PC-9 (cell line): ENCODE measurements at regions of chr7 and their contacts with region 1.

Region 1: DNA sequence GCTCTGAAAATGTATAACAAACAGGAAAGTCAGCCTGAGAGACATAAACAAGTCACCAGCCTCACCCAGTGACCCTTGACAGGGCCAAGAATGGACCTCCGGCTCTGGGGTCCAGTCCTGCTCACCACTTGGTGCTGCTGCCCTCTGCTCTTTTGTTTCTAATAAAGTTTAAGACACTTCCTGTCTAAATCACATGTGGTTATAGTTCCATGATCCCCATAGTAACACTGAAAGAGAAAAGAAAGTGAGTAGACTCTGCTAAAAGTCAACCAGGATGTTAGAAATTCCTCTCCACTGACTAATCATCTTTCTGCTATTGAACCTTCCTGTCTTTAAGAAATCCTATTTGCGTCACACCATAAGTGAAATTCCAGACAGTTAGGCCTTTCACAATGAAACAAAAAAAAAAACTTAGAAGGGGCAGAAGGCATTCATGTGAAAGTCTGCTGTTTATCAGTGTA is 179.2 kb upstream of the BET1 start:
- DNase-seq: peak; percentile 69 to 95
- H3K4me3 ChIP-seq: peak overlapping the region; percentile 27; the same call in 1 of the 2 replicates
- H3K27ac ChIP-seq: peak overlapping the region; percentile 91
- H3K4me1 ChIP-seq: peaks cover 24% of the 10 kb centered on the region
- H3K27me3 ChIP-seq: no peaks in the 10 kb centered on the region
- CTCF ChIP-seq: no peak

Region 2: DNA sequence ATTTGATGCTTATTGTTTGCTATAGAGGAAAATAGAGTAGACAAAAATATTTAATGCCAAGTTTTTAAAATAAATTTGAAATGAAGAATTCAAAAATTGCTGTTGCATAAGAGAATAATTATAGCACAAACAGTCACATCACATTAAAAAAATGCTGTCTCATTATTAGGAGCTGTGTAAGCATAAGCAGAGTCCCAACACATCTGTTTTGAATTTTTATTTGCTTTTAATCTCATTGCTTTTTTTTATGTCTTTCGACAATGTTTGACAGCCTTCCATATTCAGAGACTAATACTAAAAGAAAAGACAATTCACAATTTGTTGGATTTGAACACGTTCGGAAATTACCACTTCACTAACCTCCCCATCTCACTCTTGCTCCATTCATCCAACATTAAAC is 436.3 kb before region 1 on chr7:
- CTCF ChIA-PET with region 1: no interaction called
- POLR2A ChIA-PET with region 1: no interaction called
- intact Hi-C with region 1: no loop called
- DNase-seq: no peak
- H3K4me3 ChIP-seq: no peak overlapping the region
- H3K27ac ChIP-seq: no peak overlapping the region
- H3K4me1 ChIP-seq: no peaks in the 10 kb centered on the region
- H3K27me3 ChIP-seq: no peaks in the 10 kb centered on the region
- CTCF ChIP-seq: no peak

Region 3: GRCh38 chr7:93914325-93915081 is 268.8 kb before region 1 on chr7:
- CTCF ChIA-PET with region 1: no interaction called
- POLR2A ChIA-PET with region 1: no interaction called
- intact Hi-C with region 1: loop called (anchors 1 kb)
- DNase-seq: peak; percentile 70 to 90
- H3K4me3 ChIP-seq: peak overlapping the region; percentile 36; the same call in 1 of the 2 replicates
- H3K27ac ChIP-seq: peak overlapping the region; percentile 98
- H3K4me1 ChIP-seq: peaks cover 15% of the 10 kb centered on the region
- H3K27me3 ChIP-seq: no peaks in the 10 kb centered on the region
- CTCF ChIP-seq: no peak

Region 4: DNA sequence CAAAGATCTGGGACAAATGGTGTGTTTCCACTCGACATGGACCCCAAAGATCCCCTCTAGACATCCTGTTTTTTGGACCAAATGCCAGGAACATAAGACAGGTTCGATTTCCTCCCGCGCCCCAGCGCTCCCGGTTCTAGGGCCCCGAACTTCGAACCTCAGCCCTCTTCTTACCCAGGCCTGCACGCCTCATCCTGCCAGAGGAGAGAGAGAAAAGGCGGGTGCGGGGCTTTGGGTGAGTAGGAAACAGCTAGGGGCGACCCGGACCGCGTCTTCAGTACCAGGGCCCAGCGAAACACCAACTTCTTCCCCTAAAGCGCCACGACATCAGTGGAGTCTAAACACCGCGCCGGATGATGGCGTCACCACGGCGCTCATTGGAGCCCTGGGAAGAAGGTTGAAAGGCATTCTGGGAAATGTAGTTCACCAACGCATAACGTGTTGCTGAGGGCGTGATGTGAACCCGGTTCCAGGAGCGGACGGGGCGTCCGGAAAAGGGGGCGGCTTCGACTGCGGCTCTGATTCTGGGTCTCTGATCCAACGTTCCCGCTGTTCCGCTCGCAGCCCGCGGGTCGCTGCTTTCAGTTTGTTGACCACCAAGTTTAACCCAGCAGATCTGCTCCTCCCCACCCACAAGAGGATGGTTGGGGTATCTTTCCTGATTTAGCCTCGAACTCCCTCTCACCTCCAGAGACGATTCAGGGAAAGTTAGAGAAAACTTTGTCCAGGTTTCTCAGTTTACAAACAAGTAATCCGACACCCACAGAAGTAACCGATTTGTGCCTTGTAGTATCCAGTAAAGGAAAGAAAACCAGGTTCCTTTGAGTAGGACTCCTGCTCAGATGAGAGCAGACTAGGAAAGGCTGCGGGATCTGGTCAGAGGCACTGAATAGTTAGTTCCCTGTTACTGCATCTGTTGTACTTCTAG is 179.0 kb before region 1 on chr7 and contains the start of gene BET1:
- CTCF ChIA-PET with region 1: no interaction called
- POLR2A ChIA-PET with region 1: no interaction called
- intact Hi-C with region 1: loop called (anchors 10 kb)
- DNase-seq: peak; percentile 85 to 88
- H3K4me3 ChIP-seq: peak within 1 kb of the TSS; percentile 91
- H3K27ac ChIP-seq: peak within 1 kb of the TSS; percentile 77
- H3K4me1 ChIP-seq: peaks cover 11% of the 10 kb centered on the region
- H3K27me3 ChIP-seq: no peaks in the 10 kb centered on the region
- CTCF ChIP-seq: no peak
- total RNA-seq, gene BET1: 39.5 and 43.0 TPM in 2 replicates

Region 5: DNA sequence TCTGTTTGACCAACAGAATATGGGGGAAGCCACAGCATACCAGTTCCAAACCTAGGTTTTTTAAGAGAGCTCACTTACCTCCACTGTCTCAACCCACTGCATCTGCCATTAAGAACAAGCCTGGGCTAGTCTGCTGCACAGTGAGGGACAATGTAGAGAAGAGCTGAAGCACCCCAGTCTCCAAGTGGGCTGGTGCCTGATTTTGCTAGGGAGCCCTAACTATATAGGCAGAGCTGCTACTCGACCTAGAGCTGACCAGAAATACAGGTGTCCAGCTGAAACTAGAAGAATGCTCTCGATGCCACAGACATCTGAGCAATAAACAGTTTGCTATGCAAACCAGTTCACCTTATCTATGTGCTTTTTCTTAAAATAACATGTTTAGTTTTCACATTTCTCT is 72.3 kb before region 1 on chr7:
- CTCF ChIA-PET with region 1: no interaction called
- POLR2A ChIA-PET with region 1: no interaction called
- intact Hi-C with region 1: no loop called
- DNase-seq: no peak
- H3K4me3 ChIP-seq: no peak overlapping the region
- H3K27ac ChIP-seq: no peak overlapping the region
- H3K4me1 ChIP-seq: no peaks in the 10 kb centered on the region
- H3K27me3 ChIP-seq: no peaks in the 10 kb centered on the region
- CTCF ChIP-seq: no peak

Region 6: GRCh38 chr7:94301024-94301586 is 117.8 kb after region 1 on chr7:
- CTCF ChIA-PET with region 1: no interaction called
- POLR2A ChIA-PET with region 1: no interaction called
- intact Hi-C with region 1: loop called (anchors 1 kb)
- DNase-seq: peak; percentile 87 to 88
- H3K4me3 ChIP-seq: 0 out of 2 replicates have a peak overlapping the region, but pooled peaks have one; percentile 2
- H3K27ac ChIP-seq: peak overlapping the region; percentile 86
- H3K4me1 ChIP-seq: peaks cover 31% of the 10 kb centered on the region
- H3K27me3 ChIP-seq: no peaks in the 10 kb centered on the region
- CTCF ChIP-seq: peak; percentile 15; the same call in 1 of the 2 replicates